OCI-LY7 (cell line): ENCODE measurements at regions of chr12 and their contacts with region 1.

Region 1: GRCh38 chr12:100142851-100143559 is at the start of gene BLTP3B:
- DNase-seq: peak; percentile 87
- H3K4me3 ChIP-seq: peak within 1 kb of the TSS; percentile 82
- H3K27ac ChIP-seq: peak within 1 kb of the TSS; percentile 64
- H3K4me1 ChIP-seq: peaks cover 35% of the 10 kb centered on the region
- CTCF ChIP-seq: no peak
- total RNA-seq, gene BLTP3B: 11.6 and 18.9 TPM in 2 replicates

Region 2: DNA sequence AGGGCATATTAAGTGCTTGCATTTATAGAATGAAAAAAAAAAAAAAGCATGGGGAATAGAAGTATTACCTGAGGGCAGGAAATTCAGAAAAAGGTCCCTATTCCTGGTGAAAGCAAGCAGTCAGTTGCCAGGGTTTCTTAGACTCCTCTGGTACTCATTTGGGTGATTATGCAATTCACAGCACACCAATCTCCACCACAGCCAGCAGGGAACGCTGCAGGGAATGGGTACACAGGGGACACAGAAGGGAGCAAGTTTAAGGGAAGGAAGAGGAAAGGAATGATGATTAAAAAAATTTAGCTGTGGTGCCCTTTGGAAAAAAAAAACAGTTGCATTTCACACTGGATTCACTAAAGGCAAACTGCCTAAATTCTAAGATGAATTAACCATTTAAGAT is 14.5 kb before region 1 on chr12:
- CTCF ChIA-PET with region 1: interaction called, 3 read pairs
- POLR2A ChIA-PET with region 1: interaction called, 13 read pairs
- intact Hi-C with region 1: no loop called
- DNase-seq: no peak
- H3K4me3 ChIP-seq: no peak overlapping the region
- H3K27ac ChIP-seq: no peak overlapping the region
- H3K4me1 ChIP-seq: peaks cover 15% of the 10 kb centered on the region
- CTCF ChIP-seq: peak; percentile 53

Region 3: GRCh38 chr12:100200463-100201181 is 57.6 kb after region 1 on chr12 and contains the start of gene ACTR6:
- CTCF ChIA-PET with region 1: no interaction called
- POLR2A ChIA-PET with region 1: no interaction called
- intact Hi-C with region 1: loop called (anchors 1 kb)
- DNase-seq: peak; percentile 97
- H3K4me3 ChIP-seq: peak within 1 kb of the TSS; percentile 89
- H3K27ac ChIP-seq: peak within 1 kb of the TSS; percentile 69
- H3K4me1 ChIP-seq: peaks cover 30% of the 10 kb centered on the region
- CTCF ChIP-seq: no peak
- total RNA-seq, gene ACTR6: 14.6 and 22.2 TPM in 2 replicates

Region 4: DNA sequence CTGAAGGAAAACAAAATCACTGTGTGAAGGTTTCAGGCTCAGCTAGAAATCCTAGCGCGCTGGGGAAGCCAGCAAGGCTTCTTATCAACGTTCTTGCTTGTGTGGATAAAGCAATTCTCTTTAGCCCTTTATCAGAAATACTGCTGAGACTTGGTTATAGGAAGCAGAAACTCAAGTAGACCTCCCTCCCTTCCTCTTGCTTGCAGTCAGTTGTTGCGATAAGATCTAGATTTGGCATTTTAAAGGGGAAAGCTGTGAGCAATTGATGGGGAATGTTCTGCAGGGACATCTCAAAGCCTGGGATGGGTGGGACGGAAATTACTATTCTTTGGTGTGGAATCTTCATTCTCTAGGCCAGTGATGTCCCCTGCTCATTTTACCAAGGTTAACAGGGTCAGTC is 575.2 kb after region 1 on chr12:
- CTCF ChIA-PET with region 1: no interaction called
- POLR2A ChIA-PET with region 1: no interaction called
- intact Hi-C with region 1: no loop called
- DNase-seq: no peak
- H3K4me3 ChIP-seq: no peak overlapping the region
- H3K27ac ChIP-seq: no peak overlapping the region
- H3K4me1 ChIP-seq: no peaks in the 10 kb centered on the region
- CTCF ChIP-seq: no peak